Activated B cell treated with CpG ODN at 0.5 μM for 24 hours (primary cell): ENCODE measurements at regions of chr19 and their contacts with region 1.

Region 1: GRCh38 chr19:36114763-36115452 is at the start of gene POLR2I:
- DNase-seq: peak; percentile 93
- ATAC-seq: peak; percentile 86
- H3K4me3 Mint-ChIP-seq: peak within 1 kb of the TSS; percentile 92
- H3K27ac Mint-ChIP-seq: peak within 1 kb of the TSS; percentile 97
- H3K4me1 Mint-ChIP-seq: peaks cover 43% of the 10 kb centered on the region
- H3K27me3 Mint-ChIP-seq: no peaks in the 10 kb centered on the region
- CTCF ChIP-seq: no peak
- total RNA-seq, gene POLR2I: 46.6 and 51.6 TPM in 2 replicates

Region 2: GRCh38 chr19:35740423-35741202 is 374.3 kb before region 1 on chr19:
- CTCF ChIA-PET with region 1: no interaction called
- POLR2A ChIA-PET with region 1: interaction called, 4 read pairs
- intact Hi-C with region 1: loop called (anchors 10 kb)
- DNase-seq: peak; percentile 89
- ATAC-seq: peak; percentile 65
- H3K4me3 Mint-ChIP-seq: peak overlapping the region; percentile 95
- H3K27ac Mint-ChIP-seq: peak overlapping the region; percentile 95
- H3K4me1 Mint-ChIP-seq: peaks cover 66% of the 10 kb centered on the region
- H3K27me3 Mint-ChIP-seq: no peaks in the 10 kb centered on the region
- CTCF ChIP-seq: no peak

Region 3: DNA sequence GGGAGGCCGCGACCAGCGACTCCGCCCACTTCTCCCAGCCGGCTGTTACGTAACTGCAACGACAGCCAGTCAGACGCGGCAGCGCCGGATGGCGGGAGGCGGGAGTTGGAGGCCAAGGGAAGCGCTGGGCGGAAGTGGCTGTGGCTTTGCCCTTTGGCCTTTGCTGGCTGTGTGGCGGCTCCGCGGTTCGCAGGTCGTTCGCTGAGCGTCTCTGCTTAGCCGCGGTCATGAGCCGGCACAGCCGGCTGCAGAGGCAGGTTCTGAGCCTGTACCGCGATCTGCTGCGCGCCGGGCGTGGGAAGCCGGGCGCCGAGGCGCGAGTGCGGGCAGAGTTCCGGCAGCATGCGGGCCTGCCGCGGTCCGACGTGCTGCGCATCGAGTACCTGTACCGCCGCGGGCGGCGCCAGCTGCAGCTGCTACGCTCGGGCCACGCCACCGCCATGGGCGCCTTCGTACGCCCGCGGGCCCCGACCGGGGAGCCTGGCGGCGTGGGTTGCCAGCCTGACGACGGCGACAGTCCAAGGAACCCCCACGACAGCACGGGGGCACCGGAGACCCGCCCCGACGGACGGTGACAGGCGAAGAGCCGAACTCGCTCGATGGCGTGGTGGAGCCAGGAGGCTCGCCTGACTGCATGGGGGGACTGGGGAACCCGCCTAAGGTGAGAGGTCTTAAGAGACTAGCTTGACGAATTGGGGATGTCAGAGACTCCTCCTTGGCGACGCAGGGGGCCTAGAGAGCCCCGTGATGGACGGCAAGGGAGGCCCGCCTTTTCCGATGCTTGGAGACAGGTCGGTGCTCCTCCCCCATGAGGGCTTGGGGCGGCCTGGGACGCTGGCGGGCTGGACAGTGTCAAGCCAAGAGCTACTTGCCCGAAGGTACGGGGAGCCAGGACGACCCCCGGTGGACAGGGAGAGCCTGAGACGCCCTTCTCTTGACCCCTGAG is 119.6 kb before region 1 on chr19 and contains the start of gene SDHAF1:
- CTCF ChIA-PET with region 1: no interaction called
- POLR2A ChIA-PET with region 1: interaction called, 8 read pairs
- intact Hi-C with region 1: loop called (anchors 1 kb)
- DNase-seq: peak; percentile 88
- ATAC-seq: peak; percentile 94
- H3K4me3 Mint-ChIP-seq: peak within 1 kb of the TSS; percentile 94
- H3K27ac Mint-ChIP-seq: peak within 1 kb of the TSS; percentile 94
- H3K4me1 Mint-ChIP-seq: peaks cover 33% of the 10 kb centered on the region
- H3K27me3 Mint-ChIP-seq: no peaks in the 10 kb centered on the region
- CTCF ChIP-seq: no peak
- total RNA-seq, gene SDHAF1: 20.3 and 21.9 TPM in 2 replicates

Region 4: GRCh38 chr19:36073121-36073872 is 41.6 kb before region 1 on chr19:
- CTCF ChIA-PET with region 1: no interaction called
- POLR2A ChIA-PET with region 1: no interaction called
- intact Hi-C with region 1: no loop called
- DNase-seq: no peak
- ATAC-seq: no peak
- H3K4me3 Mint-ChIP-seq: no peak overlapping the region
- H3K27ac Mint-ChIP-seq: no peak overlapping the region
- H3K4me1 Mint-ChIP-seq: no peaks in the 10 kb centered on the region
- H3K27me3 Mint-ChIP-seq: no peaks in the 10 kb centered on the region
- CTCF ChIP-seq: no peak

Region 5: DNA sequence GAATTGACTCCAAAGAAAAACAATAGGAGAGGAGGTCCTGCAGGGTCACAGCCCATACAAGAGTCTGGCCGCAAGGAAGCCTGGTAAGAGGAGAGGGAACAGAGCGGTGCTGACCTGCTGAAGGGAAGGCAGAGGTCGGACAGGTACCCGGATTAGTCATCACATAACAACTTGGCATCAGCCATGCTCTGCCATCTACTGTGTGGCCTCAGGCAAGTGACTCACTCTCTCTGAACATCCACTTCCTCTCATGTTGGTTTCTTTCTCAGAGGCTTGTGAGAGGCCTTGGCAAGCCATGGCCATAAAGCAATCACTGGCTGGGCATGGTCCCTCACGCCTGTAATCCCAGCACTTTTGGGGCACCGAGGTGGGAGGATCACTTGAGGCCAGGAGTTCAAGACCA is 17.6 kb after region 1 on chr19:
- CTCF ChIA-PET with region 1: interaction called, 8 read pairs
- POLR2A ChIA-PET with region 1: interaction called, 27 read pairs
- intact Hi-C with region 1: loop called (anchors 1 kb)
- DNase-seq: no peak
- ATAC-seq: no peak
- H3K4me3 Mint-ChIP-seq: no peak overlapping the region
- H3K27ac Mint-ChIP-seq: no peak overlapping the region
- H3K4me1 Mint-ChIP-seq: peaks cover 18% of the 10 kb centered on the region
- H3K27me3 Mint-ChIP-seq: peaks cover 2% of the 10 kb centered on the region
- CTCF ChIP-seq: no peak

Region 6: DNA sequence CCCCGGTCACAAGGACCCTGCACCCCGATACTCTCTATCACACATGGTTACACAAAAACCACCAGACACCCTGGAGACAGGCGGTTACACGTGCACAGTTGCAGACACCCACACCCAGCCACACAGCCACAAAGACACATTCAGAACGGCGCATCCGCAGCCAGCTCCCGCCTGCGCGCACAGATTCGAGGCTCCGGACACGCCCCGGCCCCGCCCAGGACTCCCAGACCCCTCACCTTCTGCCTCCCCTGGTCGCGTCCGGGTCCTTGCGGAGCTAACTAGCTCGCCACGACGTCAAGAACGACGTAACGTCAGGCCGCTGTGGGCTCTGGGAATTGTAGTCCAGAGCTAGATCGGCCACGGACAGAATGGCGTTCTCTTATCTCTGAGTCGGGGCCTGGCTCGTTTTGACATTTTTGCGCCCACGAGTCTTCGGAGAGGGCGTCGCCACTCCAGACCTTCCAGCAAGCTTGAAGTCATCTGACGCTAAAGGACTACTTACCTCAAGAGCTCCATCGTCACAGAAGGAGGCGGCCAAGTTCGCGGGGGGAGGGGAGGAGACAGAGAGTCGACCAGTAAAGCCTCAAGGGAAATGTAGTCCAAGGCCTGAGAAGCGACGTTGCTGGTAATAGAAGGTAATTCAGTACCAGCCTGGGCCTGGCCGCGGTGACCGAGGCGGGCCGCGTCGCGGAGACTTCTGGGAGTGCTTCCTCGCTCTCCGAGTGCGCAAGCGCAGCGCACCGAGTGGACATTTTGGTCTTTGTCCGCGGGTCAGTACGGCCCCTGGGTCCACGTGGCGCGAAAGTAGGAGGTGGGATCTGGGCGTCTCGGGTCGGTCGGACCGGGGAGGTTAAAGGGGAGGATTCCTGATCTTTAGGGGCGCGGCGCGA is 99.7 kb after region 1 on chr19 and contains the starts of genes ZNF146 and ZNF565:
- CTCF ChIA-PET with region 1: no interaction called
- POLR2A ChIA-PET with region 1: interaction called, 28 read pairs
- intact Hi-C with region 1: loop called (anchors 1 kb)
- DNase-seq: peak; percentile 90
- ATAC-seq: peak; percentile 90
- H3K4me3 Mint-ChIP-seq: no peak within 1 kb of the TSS
- H3K27ac Mint-ChIP-seq: no peak within 1 kb of the TSS
- H3K4me1 Mint-ChIP-seq: peaks cover 29% of the 10 kb centered on the region
- H3K27me3 Mint-ChIP-seq: no peaks in the 10 kb centered on the region
- CTCF ChIP-seq: no peak
- total RNA-seq, gene ZNF146: 57.8 and 63.2 TPM in 2 replicates
- total RNA-seq, gene ZNF565: 2.3 and 3.2 TPM in 2 replicates